Body of pancreas (tissue), 4 donors: ENCODE measurements at regions of chr6 and their contacts with region 1.

Region 1: GRCh38 chr6:1770968-1771723 is 161.4 kb downstream of the FOXC1 start:
- DNase-seq: no peak
- ATAC-seq: no peak
- H3K4me3 ChIP-seq: no peak overlapping the region
- H3K27ac ChIP-seq: peak overlapping the region in 1 of 4 donors; percentile 41
- H3K4me1 ChIP-seq: peaks cover 17% of the 10 kb centered on the region
- H3K27me3 ChIP-seq: no peaks in the 10 kb centered on the region
- CTCF ChIP-seq: no peak
- POLR2A ChIP-seq: no peak

Region 2: GRCh38 chr6:1636971-1637871 is 133.9 kb before region 1 on chr6:
- intact Hi-C with region 1: loop called (anchors 10 kb)
- DNase-seq: peak in 3 of 4 donors; percentile 38 to 77 (median 76)
- ATAC-seq: no peak
- H3K4me3 ChIP-seq: no peak overlapping the region
- H3K27ac ChIP-seq: no peak overlapping the region
- H3K4me1 ChIP-seq: peaks cover 14% of the 10 kb centered on the region
- H3K27me3 ChIP-seq: no peaks in the 10 kb centered on the region
- CTCF ChIP-seq: no peak
- POLR2A ChIP-seq: no peak

Region 3: DNA sequence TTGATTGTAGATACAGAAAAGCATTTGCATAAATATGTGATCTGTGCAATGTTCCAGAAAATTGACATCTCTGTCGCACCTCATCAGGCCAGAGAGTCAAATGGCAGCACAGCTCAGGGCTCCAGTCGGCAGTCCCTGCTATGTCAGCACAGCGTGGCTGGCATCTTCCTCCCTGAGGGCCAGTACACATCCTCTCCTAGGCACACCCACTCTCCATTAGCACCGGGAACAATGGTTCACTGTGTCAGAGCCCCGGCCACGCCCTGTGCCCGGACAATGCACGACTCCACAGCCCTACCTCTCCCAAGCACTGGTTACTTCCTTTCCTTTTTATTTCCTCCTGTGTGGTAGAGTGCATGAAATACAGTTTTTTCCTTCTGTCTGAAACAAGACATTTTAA is 46.5 kb before region 1 on chr6:
- intact Hi-C with region 1: no loop called
- DNase-seq: peak in 3 of 4 donors; percentile 26 to 38 (median 32)
- ATAC-seq: peak; percentile 60
- H3K4me3 ChIP-seq: no peak overlapping the region
- H3K27ac ChIP-seq: peak overlapping the region in 1 of 4 donors; percentile 38
- H3K4me1 ChIP-seq: no peaks in the 10 kb centered on the region
- H3K27me3 ChIP-seq: no peaks in the 10 kb centered on the region
- CTCF ChIP-seq: no peak
- POLR2A ChIP-seq: no peak

Region 4: GRCh38 chr6:1739680-1740079 is 31.5 kb before region 1 on chr6:
- intact Hi-C with region 1: no loop called
- DNase-seq: no peak
- ATAC-seq: no peak
- H3K4me3 ChIP-seq: no peak overlapping the region
- H3K27ac ChIP-seq: no peak overlapping the region
- H3K4me1 ChIP-seq: no peaks in the 10 kb centered on the region
- H3K27me3 ChIP-seq: no peaks in the 10 kb centered on the region
- CTCF ChIP-seq: no peak
- POLR2A ChIP-seq: no peak